H1 (cell line): ENCODE measurements at regions of chr11 and their contacts with region 1.

Region 1: DNA sequence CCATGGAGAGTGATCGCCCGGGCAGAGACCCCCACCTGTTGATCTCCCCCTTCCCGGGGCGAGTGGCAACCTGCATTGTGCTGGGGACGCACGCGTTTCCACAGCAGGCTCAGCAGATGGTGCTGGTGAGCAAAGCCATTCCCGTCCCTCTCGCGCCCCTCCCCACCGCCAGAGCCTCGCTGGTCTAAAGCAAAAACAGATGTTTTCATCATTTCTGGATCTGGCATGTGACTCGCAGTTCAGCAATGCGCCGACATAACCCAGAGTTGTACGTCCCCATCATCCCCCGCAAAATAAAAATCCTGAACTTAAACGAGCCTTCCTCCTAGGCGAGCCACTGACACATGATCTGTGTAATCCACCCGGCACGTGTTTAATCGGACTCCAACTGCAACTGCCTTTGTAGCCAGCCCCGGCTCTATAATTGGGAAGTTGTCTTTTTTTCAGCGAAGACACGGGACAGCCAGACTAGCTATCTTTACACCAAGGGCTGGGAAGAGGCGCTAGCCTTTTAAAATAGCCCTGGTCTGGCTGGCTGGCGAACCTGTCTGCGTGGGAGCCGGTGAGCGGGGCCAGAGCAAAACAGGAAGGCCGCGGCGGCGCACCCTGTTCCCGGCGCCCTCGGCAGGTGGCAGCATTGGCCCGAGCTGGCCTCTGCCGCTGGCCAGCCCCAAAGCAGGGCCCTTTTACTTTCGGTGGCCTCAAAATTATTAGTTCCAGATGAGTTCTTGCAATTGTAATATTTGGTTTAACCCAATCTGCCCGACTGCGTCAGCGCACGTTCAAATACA is 203.0 kb upstream of the SORL1-AS1 start:
- DNase-seq: peak in 1 of 2 experiments; percentile 94
- H3K4me3 ChIP-seq: peak overlapping the region; percentile 19 to 60 (median 34); a peak in 7 of 8 replicates
- H3K27ac ChIP-seq: no peak overlapping the region
- H3K4me1 ChIP-seq: peaks cover 7 to 13% (median 11%) of the 10 kb centered on the region in 4 experiments
- H3K27me3 ChIP-seq: no peaks in the 10 kb centered on the region
- CTCF ChIP-seq: peak; percentile 85 to 97 (median 90)
- EP300 ChIP-seq: no peak
- POLR2A ChIP-seq: no peak
- RAD21 ChIP-seq: peak; percentile 97 to 98

Region 2: DNA sequence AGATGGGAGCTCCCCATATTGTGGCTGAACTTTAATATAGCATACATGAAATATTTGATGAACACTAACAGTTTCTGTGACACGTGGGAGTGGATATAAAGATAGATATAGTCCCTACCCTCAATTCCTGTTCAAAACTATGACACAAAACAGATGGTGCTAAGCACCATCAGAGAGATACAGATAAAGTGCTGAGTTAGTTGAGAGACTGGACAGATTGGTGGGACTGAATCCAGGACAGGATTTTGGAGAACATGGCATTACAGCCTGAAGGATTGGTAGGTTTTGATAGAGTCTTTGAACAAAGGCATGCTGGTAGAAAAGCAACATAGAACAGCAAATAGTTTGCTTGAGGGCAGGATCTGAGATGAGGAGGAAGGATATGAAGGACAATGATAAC is 12.1 kb after region 1 on chr11:
- CTCF ChIA-PET with region 1: interaction called, 11 read pairs
- POLR2A ChIA-PET with region 1: no interaction called
- DNase-seq: no peak
- H3K4me3 ChIP-seq: no peak overlapping the region
- H3K27ac ChIP-seq: no peak overlapping the region
- H3K4me1 ChIP-seq: peaks cover 0 to 3% (median 0%) of the 10 kb centered on the region in 4 experiments; a peak in 1 of 7 replicates
- H3K27me3 ChIP-seq: no peaks in the 10 kb centered on the region
- CTCF ChIP-seq: no peak
- EP300 ChIP-seq: no peak
- POLR2A ChIP-seq: no peak
- RAD21 ChIP-seq: no peak

Region 3: DNA sequence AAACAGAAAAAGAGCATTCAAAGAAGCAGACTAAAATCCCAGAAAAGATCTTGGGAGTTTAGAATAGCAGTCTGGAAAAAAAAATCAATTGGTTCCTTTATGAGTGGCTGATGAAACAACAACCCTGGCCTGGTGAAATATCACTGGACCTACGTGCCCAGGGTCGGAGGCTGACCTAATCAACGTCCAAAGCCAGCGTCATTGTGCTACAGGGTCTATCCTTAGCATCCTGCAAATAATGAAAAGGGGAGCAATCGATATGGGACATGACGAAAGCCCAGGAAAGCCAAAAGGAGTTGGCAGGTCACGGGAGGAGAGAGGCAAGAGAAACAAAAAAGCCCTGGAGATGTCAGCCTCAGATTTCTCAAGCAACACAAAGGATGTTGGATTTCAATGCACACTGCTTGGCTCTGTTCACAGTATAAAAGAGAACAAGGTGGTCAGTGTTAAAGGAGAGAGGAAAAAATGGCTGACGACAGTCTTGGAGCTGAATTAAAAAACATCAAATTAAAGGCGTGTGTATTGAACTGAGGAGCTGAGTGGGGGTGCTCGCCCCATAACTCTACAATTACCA is 311.5 kb after region 1 on chr11:
- CTCF ChIA-PET with region 1: interaction called, 10 read pairs
- POLR2A ChIA-PET with region 1: no interaction called
- DNase-seq: no peak
- H3K4me3 ChIP-seq: no peak overlapping the region
- H3K27ac ChIP-seq: no peak overlapping the region
- H3K4me1 ChIP-seq: peaks cover 0 to 3% (median 1%) of the 10 kb centered on the region in 4 experiments; a peak in 2 of 7 replicates
- H3K27me3 ChIP-seq: no peaks in the 10 kb centered on the region
- CTCF ChIP-seq: no peak
- EP300 ChIP-seq: no peak
- POLR2A ChIP-seq: no peak
- RAD21 ChIP-seq: no peak

Region 4: GRCh38 chr11:122108192-122108799 is 452.6 kb after region 1 on chr11:
- CTCF ChIA-PET with region 1: interaction called, 51 read pairs
- POLR2A ChIA-PET with region 1: no interaction called
- DNase-seq: peak in 1 of 2 experiments; percentile 77
- H3K4me3 ChIP-seq: no peak overlapping the region
- H3K27ac ChIP-seq: no peak overlapping the region
- H3K4me1 ChIP-seq: peaks cover 0 to 3% (median under 1%) of the 10 kb centered on the region in 4 experiments; a peak in 2 of 7 replicates
- H3K27me3 ChIP-seq: no peaks in the 10 kb centered on the region
- CTCF ChIP-seq: peak in 2 of 3 experiments; percentile 76 to 89; a peak in 3 of 4 replicates
- EP300 ChIP-seq: no peak
- POLR2A ChIP-seq: no peak
- RAD21 ChIP-seq: peak; percentile 66 to 71

Region 5: DNA sequence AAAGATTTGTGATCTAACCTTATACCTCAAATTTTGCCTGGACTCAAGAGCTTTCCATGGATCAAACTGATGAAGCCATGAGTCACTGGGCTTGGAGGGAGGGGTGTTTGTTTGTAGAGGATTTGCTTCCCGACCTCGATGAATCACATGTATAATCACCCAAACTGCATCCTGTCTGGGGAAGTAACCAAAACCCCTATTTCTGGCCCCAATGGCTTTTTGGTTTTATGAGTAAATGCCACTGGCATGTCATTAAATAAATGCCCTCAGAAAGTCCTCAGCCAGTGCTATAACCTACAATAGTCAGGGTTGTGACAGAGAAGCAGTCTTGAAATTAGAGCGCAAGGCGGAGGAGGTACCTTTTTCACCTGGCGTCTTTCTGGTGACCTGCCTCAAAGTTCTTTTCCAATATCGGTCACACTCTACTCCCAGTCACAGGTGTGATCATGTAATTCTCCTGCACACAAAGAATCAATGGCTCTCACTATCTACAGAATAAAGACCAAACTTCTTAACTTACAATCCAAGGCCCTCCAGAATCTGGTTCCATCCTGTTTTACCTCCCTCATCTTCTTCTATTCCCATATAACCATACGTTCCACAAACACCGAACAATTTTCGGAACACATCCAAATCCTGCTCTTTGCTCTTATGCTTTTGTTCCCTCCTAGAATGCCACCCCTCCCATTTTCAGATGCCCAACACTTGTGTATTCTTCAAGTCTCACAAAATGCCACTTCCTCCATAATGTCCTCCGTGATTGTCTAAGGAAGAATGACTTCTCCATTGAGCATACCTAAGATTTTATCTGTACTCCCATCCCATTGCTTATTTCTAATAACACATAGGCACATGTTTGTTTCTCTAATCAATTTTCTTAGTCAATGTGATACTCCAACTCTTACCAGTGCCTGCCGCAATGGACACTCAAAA is 541.6 kb after region 1 on chr11:
- CTCF ChIA-PET with region 1: interaction called, 43 read pairs
- POLR2A ChIA-PET with region 1: no interaction called
- DNase-seq: no peak
- H3K4me3 ChIP-seq: no peak overlapping the region
- H3K27ac ChIP-seq: no peak overlapping the region
- H3K4me1 ChIP-seq: peaks cover 0 to 3% (median 0%) of the 10 kb centered on the region in 4 experiments; a peak in 2 of 7 replicates
- H3K27me3 ChIP-seq: no peaks in the 10 kb centered on the region
- CTCF ChIP-seq: no peak
- EP300 ChIP-seq: no peak
- POLR2A ChIP-seq: no peak
- RAD21 ChIP-seq: no peak